ENCODE measurements at regions of chr13 and their contacts with region 1.

Region 1: DNA sequence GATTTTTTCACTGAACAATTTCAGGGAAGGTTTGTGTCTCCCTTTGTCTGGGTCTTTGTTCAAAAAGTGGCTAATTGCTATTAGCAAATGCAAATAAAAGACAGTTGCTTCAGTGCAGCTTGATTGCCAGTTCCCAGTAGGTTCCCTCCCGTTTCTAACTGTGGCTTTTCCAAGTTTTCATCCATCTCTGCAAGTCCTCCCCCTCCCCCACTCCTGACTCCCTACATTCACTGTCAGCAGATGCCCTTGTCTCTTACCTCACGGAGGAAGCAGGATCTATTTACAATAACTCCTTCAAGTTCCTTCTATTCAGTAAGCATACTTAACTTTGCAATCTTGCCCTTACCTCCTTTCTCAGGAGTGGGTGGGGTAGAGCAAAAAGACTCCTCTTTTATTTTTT is 55.4 kb upstream of the SCEL start:
- DNase-seq: no peak
- ATAC-seq: no peak
- H3K4me3 Mint-ChIP-seq: no peak overlapping the region
- H3K27ac Mint-ChIP-seq: no peak overlapping the region
- H3K4me1 Mint-ChIP-seq: peaks cover 10% of the 10 kb centered on the region
- H3K27me3 Mint-ChIP-seq: peaks cover 2% of the 10 kb centered on the region

Region 2: GRCh38 chr13:77026818-77027585 is 453.1 kb before region 1 on chr13 and contains the start of gene FBXL3:
- CTCF ChIA-PET with region 1: interaction called, 10 read pairs
- POLR2A ChIA-PET with region 1: interaction called, 7 read pairs
- DNase-seq: peak; percentile 86
- ATAC-seq: peak; percentile 80
- H3K4me3 Mint-ChIP-seq: peak within 1 kb of the TSS; percentile 94
- H3K27ac Mint-ChIP-seq: peak within 1 kb of the TSS; percentile 98
- H3K4me1 Mint-ChIP-seq: peaks cover 54% of the 10 kb centered on the region
- H3K27me3 Mint-ChIP-seq: no peaks in the 10 kb centered on the region
- total RNA-seq, gene FBXL3: 35.6 to 38.0 TPM

Region 3: DNA sequence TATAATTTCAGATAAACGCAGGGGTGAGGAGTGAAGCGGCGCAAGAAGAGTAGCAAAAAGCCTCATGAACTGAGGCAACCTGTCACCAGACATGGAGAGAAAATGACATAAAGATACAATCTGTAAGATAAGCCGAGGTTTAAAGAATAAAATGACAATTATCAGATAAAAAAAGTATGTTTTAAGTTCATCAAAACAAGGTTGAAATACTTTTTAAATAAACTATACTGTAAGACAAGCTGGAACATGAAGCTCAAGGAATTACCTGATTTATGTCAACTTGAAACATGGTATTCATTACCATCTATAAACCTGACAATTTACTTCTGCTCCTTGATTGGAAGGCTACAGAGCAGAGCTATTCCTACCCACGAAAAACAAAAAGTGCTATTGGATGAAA is 214.7 kb before region 1 on chr13:
- CTCF ChIA-PET with region 1: interaction called, 13 read pairs
- POLR2A ChIA-PET with region 1: no interaction called
- DNase-seq: no peak
- ATAC-seq: no peak
- H3K4me3 Mint-ChIP-seq: no peak overlapping the region
- H3K27ac Mint-ChIP-seq: no peak overlapping the region
- H3K4me1 Mint-ChIP-seq: no peaks in the 10 kb centered on the region
- H3K27me3 Mint-ChIP-seq: no peaks in the 10 kb centered on the region

Region 4: GRCh38 chr13:77329133-77329910 is 150.7 kb before region 1 on chr13:
- CTCF ChIA-PET with region 1: interaction called, 78 read pairs
- POLR2A ChIA-PET with region 1: interaction called, 17 read pairs
- DNase-seq: peak; percentile 97
- ATAC-seq: peak; percentile 75
- H3K4me3 Mint-ChIP-seq: peak overlapping the region; percentile 98
- H3K27ac Mint-ChIP-seq: peak overlapping the region; percentile 97
- H3K4me1 Mint-ChIP-seq: peaks cover 37% of the 10 kb centered on the region
- H3K27me3 Mint-ChIP-seq: peaks cover 1% of the 10 kb centered on the region

Region 5: GRCh38 chr13:77502104-77502720 is 22.1 kb after region 1 on chr13:
- CTCF ChIA-PET with region 1: interaction called, 24 read pairs
- POLR2A ChIA-PET with region 1: interaction called, 3 read pairs
- DNase-seq: no peak
- ATAC-seq: no peak
- H3K4me3 Mint-ChIP-seq: no peak overlapping the region
- H3K27ac Mint-ChIP-seq: no peak overlapping the region
- H3K4me1 Mint-ChIP-seq: no peaks in the 10 kb centered on the region
- H3K27me3 Mint-ChIP-seq: peaks cover 3% of the 10 kb centered on the region

Measured in activated CD8-positive, alpha-beta T cell treated with anti-CD3 and anti-CD28 coated beads, Interleukin-2, amount 10 ng/mL, durations not matched to agents 7 days and 5 days (primary cell).